ENCODE measurements at regions of chrX and their contacts with region 1.

Region 1: DNA sequence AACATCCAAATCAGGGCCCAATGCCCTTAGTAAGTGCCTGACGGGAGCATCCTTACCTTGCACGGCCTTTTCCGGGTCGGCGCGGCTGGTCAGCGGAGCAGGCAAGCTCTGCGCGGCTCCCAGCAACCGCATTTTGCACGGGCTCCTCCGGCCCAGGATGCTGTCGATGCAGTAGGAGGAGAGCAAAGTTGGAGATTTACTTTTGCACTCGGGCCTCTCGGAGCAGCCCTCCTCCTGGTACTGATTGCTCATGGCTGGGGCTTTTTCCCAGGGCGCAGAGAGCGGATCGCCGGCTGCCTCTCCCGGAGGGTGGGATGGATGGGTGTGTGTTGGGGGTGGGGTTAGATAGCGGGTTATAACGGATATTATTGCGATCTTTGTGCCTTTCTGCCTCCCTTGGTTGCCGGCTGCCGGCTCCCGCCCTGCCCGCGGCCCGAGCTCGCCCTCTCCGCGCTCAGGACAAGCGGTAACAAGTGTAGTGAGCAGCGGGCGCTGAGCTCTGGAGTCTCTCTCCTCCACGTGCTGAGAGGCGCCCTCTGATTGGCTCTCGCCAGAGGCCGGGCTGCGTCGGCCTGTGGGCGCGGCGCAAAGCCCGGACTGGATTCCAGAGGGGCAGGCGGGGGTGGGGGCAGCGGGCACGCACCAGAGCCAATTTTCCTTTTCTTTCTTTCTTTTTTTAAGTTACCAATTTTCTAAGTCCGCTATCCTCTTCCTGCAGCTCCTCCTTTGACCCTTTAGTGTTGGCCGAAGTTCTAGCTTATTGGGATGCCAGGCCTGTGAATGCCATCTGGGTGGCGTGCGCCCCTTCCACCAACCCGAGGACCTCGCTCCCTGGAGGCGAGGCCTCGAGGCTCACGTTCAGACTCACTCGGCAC is at the start of gene ARX:
- DNase-seq: peak; percentile 85 to 89 (median 88)
- H3K4me3 ChIP-seq: peak within 1 kb of the TSS; percentile 34
- H3K27ac ChIP-seq: peak within 1 kb of the TSS; percentile 68 to 85
- H3K4me1 ChIP-seq: no peaks in the 10 kb centered on the region
- H3K27me3 ChIP-seq: no peaks in the 10 kb centered on the region
- CTCF ChIP-seq: no peak
- EP300 ChIP-seq: no peak
- POLR2A ChIP-seq: peak; percentile 60
- total RNA-seq, gene ARX: 23.9 to 152 (median 91.5) TPM

Region 2: DNA sequence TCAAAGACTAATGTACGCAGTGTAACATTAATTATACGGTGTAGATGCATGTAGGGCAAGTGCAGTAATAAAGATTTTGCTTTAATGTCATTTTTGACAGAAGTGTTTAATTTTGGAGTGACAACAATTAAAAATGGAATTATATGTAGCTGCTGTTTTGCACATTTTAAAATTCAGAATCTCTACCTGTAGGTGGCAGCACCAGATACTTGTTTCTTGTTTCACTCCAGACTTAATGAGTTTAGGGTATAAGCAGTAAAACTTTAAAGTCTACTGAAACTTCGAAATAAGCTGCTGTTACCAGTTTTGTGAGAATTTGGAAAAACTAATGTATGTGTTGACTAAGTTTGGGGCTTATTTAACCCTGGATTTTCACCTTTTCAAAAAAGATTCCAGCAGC is 177.1 kb before region 1 on chrX:
- intact Hi-C with region 1: loop called in 2 of 4 experiments (anchors 5 to 10 kb)
- DNase-seq: no peak
- H3K4me3 ChIP-seq: no peak overlapping the region
- H3K27ac ChIP-seq: no peak overlapping the region
- H3K4me1 ChIP-seq: no peaks in the 10 kb centered on the region
- H3K27me3 ChIP-seq: no peaks in the 10 kb centered on the region
- CTCF ChIP-seq: peak; percentile 19 to 42 (median 28)
- EP300 ChIP-seq: no peak
- POLR2A ChIP-seq: no peak

Region 3: GRCh38 chrX:24846551-24847157 is 169.1 kb before region 1 on chrX:
- intact Hi-C with region 1: loop called in 2 of 4 experiments (anchors 5 to 10 kb)
- DNase-seq: peak in 4 of 5 donors; percentile 21 to 75 (median 59)
- H3K4me3 ChIP-seq: no peak overlapping the region
- H3K27ac ChIP-seq: no peak overlapping the region
- H3K4me1 ChIP-seq: no peaks in the 10 kb centered on the region
- H3K27me3 ChIP-seq: no peaks in the 10 kb centered on the region
- CTCF ChIP-seq: no peak
- EP300 ChIP-seq: no peak
- POLR2A ChIP-seq: no peak

Region 4: GRCh38 chrX:24870143-24870542 is 145.6 kb before region 1 on chrX:
- intact Hi-C with region 1: loop called in 1 of 4 experiments (anchors 10 kb)
- DNase-seq: no peak
- H3K4me3 ChIP-seq: no peak overlapping the region
- H3K27ac ChIP-seq: no peak overlapping the region
- H3K4me1 ChIP-seq: no peaks in the 10 kb centered on the region
- H3K27me3 ChIP-seq: no peaks in the 10 kb centered on the region
- CTCF ChIP-seq: no peak
- EP300 ChIP-seq: no peak
- POLR2A ChIP-seq: no peak